Heart right ventricle (tissue), 16 donors: ENCODE measurements at regions of chr7 and their contacts with region 1.

Region 1: DNA sequence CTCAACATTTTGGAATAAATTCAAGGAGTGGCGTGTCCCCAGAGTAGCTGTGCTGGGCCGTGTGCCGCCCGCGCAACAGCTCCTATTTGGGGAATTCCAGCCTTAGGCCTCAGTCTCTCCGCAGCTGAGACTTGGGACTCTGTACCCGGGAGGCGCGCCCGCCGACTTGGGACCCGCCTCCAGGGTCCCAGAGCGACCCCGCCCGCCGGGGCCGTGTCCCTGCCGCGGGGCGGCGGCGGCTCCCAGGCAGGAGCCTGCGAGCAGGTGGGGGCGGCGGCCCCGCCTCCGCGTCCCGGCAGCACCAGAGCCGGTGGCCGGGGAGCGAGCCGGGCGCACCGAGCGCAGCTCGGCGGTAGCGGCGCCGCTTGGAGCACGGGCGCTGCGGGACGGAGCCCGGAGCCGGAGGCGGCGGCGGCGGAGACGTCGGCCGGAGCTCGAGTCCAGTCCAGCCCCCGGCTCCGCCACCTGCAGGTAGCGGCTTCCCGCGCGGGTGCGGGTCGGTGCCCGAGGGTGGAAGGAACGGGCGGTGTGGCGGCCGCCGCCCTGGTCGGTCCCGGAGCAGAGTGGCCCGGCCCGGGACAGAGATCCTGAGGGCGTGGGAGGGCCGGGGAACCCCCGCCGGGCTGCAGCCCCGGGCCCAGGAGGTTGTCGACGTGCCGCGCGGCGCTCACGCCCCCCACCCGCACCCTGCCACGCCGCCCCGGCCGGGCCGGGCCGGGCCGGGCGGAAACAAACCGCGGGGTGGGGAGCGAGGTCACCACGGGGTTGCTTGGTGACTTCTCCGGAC is at the start of gene WIPF3:
- DNase-seq: peak; percentile 14 to 44
- ATAC-seq: peak; percentile 56 to 86 (median 75)
- H3K4me3 ChIP-seq: peak within 1 kb of the TSS; percentile 0 to 84 (median 64)
- H3K27ac ChIP-seq: peak within 1 kb of the TSS; percentile 17 to 83 (median 74)
- H3K4me1 ChIP-seq: peaks cover 0 to 16% (median 15%) of the 10 kb centered on the region in 9 donors
- H3K27me3 ChIP-seq: peaks cover 0 to 68% (median 0%) of the 10 kb centered on the region in 7 donors
- CTCF ChIP-seq: no peak
- total RNA-seq, gene WIPF3: 4.4 to 15.4 (median 7.7) TPM

Region 2: DNA sequence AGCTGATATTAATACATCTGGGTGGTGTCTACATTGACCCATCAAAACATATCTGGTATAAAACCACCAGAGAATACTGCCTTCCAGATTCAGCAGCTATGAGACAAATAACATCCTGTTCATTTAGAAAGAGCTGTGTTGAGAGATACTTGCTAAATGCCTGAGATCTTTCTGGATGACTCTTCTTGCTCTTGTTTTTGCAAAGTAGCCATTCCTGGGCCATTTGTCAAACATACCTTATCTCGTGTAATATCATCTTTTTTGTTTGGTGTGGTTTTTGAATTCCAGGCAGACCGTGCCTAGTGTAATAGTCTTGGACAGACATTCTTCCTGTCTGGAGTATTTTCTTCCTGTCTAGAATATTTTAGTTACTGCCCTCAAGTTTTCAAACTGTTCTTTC is 317.4 kb before region 1 on chr7:
- intact Hi-C with region 1: no loop called
- DNase-seq: no peak
- ATAC-seq: peak in 7 of 8 donors; percentile 30 to 71 (median 58)
- H3K4me3 ChIP-seq: peak overlapping the region in 2 of 10 donors; percentile 3 to 6
- H3K27ac ChIP-seq: peak overlapping the region in 8 of 10 donors; percentile 18 to 77 (median 50)
- H3K4me1 ChIP-seq: peaks cover 0 to 44% (median 19%) of the 10 kb centered on the region in 9 donors
- H3K27me3 ChIP-seq: no peaks in the 10 kb centered on the region
- CTCF ChIP-seq: no peak

Region 3: DNA sequence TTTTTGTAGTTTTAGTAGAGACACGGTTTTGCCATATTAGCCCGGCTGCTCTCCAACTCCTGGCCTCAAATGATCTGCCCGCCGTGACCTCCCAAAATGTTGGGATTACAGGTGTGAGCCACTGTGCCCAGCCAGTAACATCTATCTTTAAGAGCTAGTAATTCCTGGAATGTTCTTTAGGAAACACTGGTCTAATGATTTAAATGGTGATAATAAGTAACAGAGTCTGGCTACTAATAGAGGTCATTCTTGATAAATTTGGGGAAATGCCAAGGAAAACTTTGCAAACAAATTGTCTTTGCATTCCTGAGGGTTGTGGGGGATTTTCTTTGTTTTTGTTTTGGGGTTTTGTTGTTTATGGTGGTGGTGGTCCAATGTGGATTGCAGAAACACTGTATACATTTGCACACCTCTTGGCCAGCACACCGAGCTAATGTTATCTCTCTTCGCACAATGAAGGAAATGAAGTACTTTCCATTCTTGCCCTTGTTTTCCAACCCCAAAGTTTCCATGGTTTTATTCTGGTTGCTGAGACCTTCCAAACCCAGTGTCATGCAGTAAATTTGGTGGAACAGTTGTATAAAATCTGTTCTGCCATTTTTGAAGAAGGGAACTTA is 51.4 kb before region 1 on chr7:
- intact Hi-C with region 1: loop called in 2 of 10 experiments (anchors 5 to 10 kb)
- DNase-seq: no peak
- ATAC-seq: peak in 1 of 8 donors; percentile 44
- H3K4me3 ChIP-seq: no peak overlapping the region
- H3K27ac ChIP-seq: no peak overlapping the region
- H3K4me1 ChIP-seq: no peaks in the 10 kb centered on the region
- H3K27me3 ChIP-seq: no peaks in the 10 kb centered on the region
- CTCF ChIP-seq: no peak

Region 4: DNA sequence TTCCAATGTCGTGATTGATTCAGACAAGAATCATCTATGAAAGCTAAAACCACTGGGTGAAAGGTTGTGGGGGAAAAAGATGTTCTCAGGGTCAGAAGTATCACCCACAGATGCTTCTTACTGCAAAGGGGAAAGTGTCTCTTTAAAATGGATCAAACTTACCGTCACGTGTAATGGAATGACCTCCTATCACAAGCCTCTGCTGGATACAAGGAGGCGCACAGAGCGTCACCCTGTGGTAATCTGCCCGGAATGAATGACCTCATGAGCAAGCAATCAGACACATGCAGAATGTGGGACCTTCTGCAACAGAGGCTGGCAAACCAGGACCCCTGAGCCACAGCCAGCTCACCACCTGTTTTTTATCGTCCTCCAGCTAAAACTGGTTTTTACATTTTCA is 32.9 kb after region 1 on chr7:
- intact Hi-C with region 1: no loop called
- DNase-seq: peak; percentile 36 to 73
- ATAC-seq: peak; percentile 84 to 99 (median 96)
- H3K4me3 ChIP-seq: no peak overlapping the region
- H3K27ac ChIP-seq: peak overlapping the region in 4 of 10 donors; percentile 37 to 51 (median 44)
- H3K4me1 ChIP-seq: peaks cover 0 to 20% (median 3%) of the 10 kb centered on the region in 9 donors
- H3K27me3 ChIP-seq: no peaks in the 10 kb centered on the region
- CTCF ChIP-seq: peak in 3 of 9 donors; percentile 6 to 18 (median 9)

Region 5: DNA sequence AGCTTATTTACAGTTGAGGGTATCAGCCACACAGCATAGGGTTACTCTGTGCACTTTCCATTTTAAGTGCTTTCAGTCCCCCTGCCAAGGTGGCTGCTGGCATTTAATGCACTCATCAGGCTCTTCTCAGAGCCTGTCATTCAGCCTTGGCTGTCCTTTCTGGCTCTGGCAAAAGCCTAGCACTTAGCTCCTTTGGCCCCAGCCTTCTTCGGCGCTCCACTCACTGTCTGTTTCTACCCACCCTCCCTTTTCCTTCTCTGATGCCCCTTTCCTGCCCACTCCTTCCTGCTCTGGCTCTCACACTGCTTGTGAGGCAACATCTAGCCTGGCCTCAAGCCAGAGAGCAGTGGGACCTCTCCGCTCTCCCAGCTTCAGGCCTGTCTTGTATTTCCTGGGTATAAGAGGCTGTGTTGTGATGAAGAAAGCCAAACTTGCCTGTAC is 60.1 kb after region 1 on chr7:
- intact Hi-C with region 1: loop called in 1 of 10 experiments (anchors 5 kb)
- DNase-seq: peak; percentile 40 to 53
- ATAC-seq: peak; percentile 46 to 95 (median 84)
- H3K4me3 ChIP-seq: no peak overlapping the region
- H3K27ac ChIP-seq: peak overlapping the region in 8 of 10 donors; percentile 18 to 84 (median 55)
- H3K4me1 ChIP-seq: peaks cover 5 to 31% (median 29%) of the 10 kb centered on the region in 9 donors
- H3K27me3 ChIP-seq: no peaks in the 10 kb centered on the region
- CTCF ChIP-seq: no peak